ENCODE measurements at regions of chr5 and their contacts with region 1.

Region 1: GRCh38 chr5:39283231-39283818 is 64.0 kb upstream of the FYB1 start:
- DNase-seq: peak; percentile 77
- ATAC-seq: peak; percentile 64
- H3K4me3 ChIP-seq: no peak overlapping the region
- H3K4me3 Mint-ChIP-seq: no peak overlapping the region
- H3K27ac ChIP-seq: no peak overlapping the region
- H3K27ac Mint-ChIP-seq: no peak overlapping the region
- H3K4me1 ChIP-seq: no peaks in the 10 kb centered on the region
- H3K4me1 Mint-ChIP-seq: no peaks in the 10 kb centered on the region
- H3K27me3 ChIP-seq: peaks cover 0 to 12% (median 0%) of the 10 kb centered on the region in 4 experiments
- H3K27me3 Mint-ChIP-seq: peaks cover 28% of the 10 kb centered on the region
- CTCF ChIP-seq: peak; percentile 80

Region 2: GRCh38 chr5:38994324-38994927 is 288.9 kb before region 1 on chr5:
- CTCF ChIA-PET with region 1: no interaction called
- POLR2A ChIA-PET with region 1: no interaction called
- intact Hi-C with region 1: loop called (anchors 1 kb)
- DNase-seq: peak; percentile 62
- ATAC-seq: peak; percentile 33
- H3K4me3 ChIP-seq: no peak overlapping the region
- H3K4me3 Mint-ChIP-seq: no peak overlapping the region
- H3K27ac ChIP-seq: no peak overlapping the region
- H3K27ac Mint-ChIP-seq: no peak overlapping the region
- H3K4me1 ChIP-seq: no peaks in the 10 kb centered on the region
- H3K4me1 Mint-ChIP-seq: peaks cover 2% of the 10 kb centered on the region
- H3K27me3 ChIP-seq: no peaks in the 10 kb centered on the region
- H3K27me3 Mint-ChIP-seq: no peaks in the 10 kb centered on the region
- CTCF ChIP-seq: peak; percentile 33

Region 3: GRCh38 chr5:39148983-39149534 is 134.3 kb before region 1 on chr5:
- CTCF ChIA-PET with region 1: interaction called, 7 read pairs
- POLR2A ChIA-PET with region 1: no interaction called
- intact Hi-C with region 1: loop called (anchors 1 kb)
- DNase-seq: peak; percentile 17
- ATAC-seq: no peak
- H3K4me3 ChIP-seq: no peak overlapping the region
- H3K4me3 Mint-ChIP-seq: no peak overlapping the region
- H3K27ac ChIP-seq: no peak overlapping the region
- H3K27ac Mint-ChIP-seq: no peak overlapping the region
- H3K4me1 ChIP-seq: peaks cover 15 to 16% of the 10 kb centered on the region in 2 donors
- H3K4me1 Mint-ChIP-seq: peaks cover 28% of the 10 kb centered on the region
- H3K27me3 ChIP-seq: no peaks in the 10 kb centered on the region
- H3K27me3 Mint-ChIP-seq: no peaks in the 10 kb centered on the region
- CTCF ChIP-seq: peak; percentile 51

Region 4: GRCh38 chr5:39211773-39212172 is 71.6 kb before region 1 on chr5:
- CTCF ChIA-PET with region 1: interaction called, 173 read pairs
- POLR2A ChIA-PET with region 1: no interaction called
- intact Hi-C with region 1: no loop called
- DNase-seq: peak; percentile 21
- ATAC-seq: no peak
- H3K4me3 ChIP-seq: no peak overlapping the region
- H3K4me3 Mint-ChIP-seq: no peak overlapping the region
- H3K27ac ChIP-seq: no peak overlapping the region
- H3K27ac Mint-ChIP-seq: no peak overlapping the region
- H3K4me1 ChIP-seq: peaks cover 16 to 18% of the 10 kb centered on the region in 2 donors
- H3K4me1 Mint-ChIP-seq: peaks cover 15% of the 10 kb centered on the region
- H3K27me3 ChIP-seq: no peaks in the 10 kb centered on the region
- H3K27me3 Mint-ChIP-seq: peaks cover 26% of the 10 kb centered on the region
- CTCF ChIP-seq: no peak

Region 5: DNA sequence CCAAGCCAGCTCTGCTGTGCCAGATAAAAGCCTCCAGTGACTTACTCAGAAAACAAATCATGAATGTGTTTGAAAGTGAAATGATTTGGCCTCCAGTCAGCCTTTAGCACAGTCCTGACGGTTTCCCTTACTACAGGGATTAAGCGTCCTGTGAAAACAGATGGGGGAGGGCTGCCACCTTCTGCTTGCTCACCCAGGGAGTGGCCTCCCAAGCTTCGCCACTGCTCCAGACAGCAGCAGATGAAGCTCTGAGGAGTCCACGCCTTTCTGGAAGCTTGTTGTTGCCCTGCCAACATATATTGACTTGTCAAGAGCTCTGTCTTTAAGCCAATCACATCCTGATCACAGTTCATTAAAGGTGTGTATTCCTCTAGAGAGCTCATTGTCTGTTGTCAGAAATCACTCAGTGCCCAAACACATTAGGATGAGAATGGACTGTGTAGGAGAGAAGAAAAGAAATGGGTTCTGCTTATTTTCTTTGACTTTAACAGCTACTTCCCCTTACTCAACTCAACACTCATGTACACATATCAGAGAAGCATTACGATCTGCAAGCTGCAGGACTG is 59.0 kb before region 1 on chr5:
- CTCF ChIA-PET with region 1: interaction called, 173 read pairs
- POLR2A ChIA-PET with region 1: no interaction called
- intact Hi-C with region 1: no loop called
- DNase-seq: no peak
- ATAC-seq: no peak
- H3K4me3 ChIP-seq: no peak overlapping the region
- H3K4me3 Mint-ChIP-seq: no peak overlapping the region
- H3K27ac ChIP-seq: no peak overlapping the region
- H3K27ac Mint-ChIP-seq: no peak overlapping the region
- H3K4me1 ChIP-seq: no peaks in the 10 kb centered on the region
- H3K4me1 Mint-ChIP-seq: no peaks in the 10 kb centered on the region
- H3K27me3 ChIP-seq: no peaks in the 10 kb centered on the region
- H3K27me3 Mint-ChIP-seq: no peaks in the 10 kb centered on the region
- CTCF ChIP-seq: no peak

Region 6: DNA sequence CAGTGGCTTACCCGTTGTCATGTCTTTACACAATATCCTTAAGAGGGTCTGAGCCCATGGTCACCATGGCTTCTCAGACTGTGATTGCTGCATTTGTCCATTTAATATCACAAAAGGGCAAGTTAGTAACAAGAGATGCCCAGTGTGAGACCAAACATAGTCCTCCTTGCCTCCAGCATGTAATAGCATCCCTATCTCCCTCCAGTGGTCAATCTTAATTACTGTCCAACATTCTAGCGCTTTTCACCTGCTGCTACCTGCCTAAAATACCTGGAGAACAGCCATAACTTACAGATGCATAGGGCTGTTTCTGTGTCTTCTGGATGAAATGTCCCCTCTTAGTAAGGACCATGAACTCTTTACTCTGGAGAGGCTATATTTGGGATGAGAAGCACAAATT is 408.7 kb after region 1 on chr5:
- CTCF ChIA-PET with region 1: no interaction called
- POLR2A ChIA-PET with region 1: no interaction called
- intact Hi-C with region 1: no loop called
- DNase-seq: no peak
- ATAC-seq: no peak
- H3K4me3 ChIP-seq: no peak overlapping the region
- H3K4me3 Mint-ChIP-seq: no peak overlapping the region
- H3K27ac ChIP-seq: no peak overlapping the region
- H3K27ac Mint-ChIP-seq: no peak overlapping the region
- H3K4me1 ChIP-seq: no peaks in the 10 kb centered on the region
- H3K4me1 Mint-ChIP-seq: no peaks in the 10 kb centered on the region
- H3K27me3 ChIP-seq: peaks cover 0 to 5% (median 0%) of the 10 kb centered on the region in 4 experiments
- H3K27me3 Mint-ChIP-seq: peaks cover 15% of the 10 kb centered on the region
- CTCF ChIP-seq: no peak